Endothelial cell of umbilical vein (primary cell): ENCODE measurements at regions of chr10 and their contacts with region 1.

Region 1: GRCh38 chr10:3467052-3467951 is 294.7 kb upstream of the PITRM1 start:
- DNase-seq: peak; percentile 99
- H3K4me3 ChIP-seq: peak overlapping the region in 1 of 3 experiments; percentile 45
- H3K27ac ChIP-seq: peak overlapping the region; percentile 100
- H3K4me1 ChIP-seq: peaks cover 44% of the 10 kb centered on the region
- H3K27me3 ChIP-seq: no peaks in the 10 kb centered on the region
- CTCF ChIP-seq: peak; percentile 63 to 71
- POLR2A ChIP-seq: peak; percentile 18

Region 2: GRCh38 chr10:3197348-3198003 is 269.8 kb before region 1 on chr10:
- CTCF ChIA-PET with region 1: no interaction called
- POLR2A ChIA-PET with region 1: no interaction called
- dilution Hi-C with region 1: no loop called
- intact Hi-C with region 1: loop called (anchors 1 kb)
- DNase-seq: peak; percentile 86
- H3K4me3 ChIP-seq: peak overlapping the region in 2 of 3 experiments; percentile 1 to 6
- H3K27ac ChIP-seq: no peak overlapping the region
- H3K4me1 ChIP-seq: peaks cover 12% of the 10 kb centered on the region
- H3K27me3 ChIP-seq: peaks cover 0 to 6% of the 10 kb centered on the region in 2 experiments
- CTCF ChIP-seq: peak; percentile 93 to 96
- POLR2A ChIP-seq: no peak

Region 3: DNA sequence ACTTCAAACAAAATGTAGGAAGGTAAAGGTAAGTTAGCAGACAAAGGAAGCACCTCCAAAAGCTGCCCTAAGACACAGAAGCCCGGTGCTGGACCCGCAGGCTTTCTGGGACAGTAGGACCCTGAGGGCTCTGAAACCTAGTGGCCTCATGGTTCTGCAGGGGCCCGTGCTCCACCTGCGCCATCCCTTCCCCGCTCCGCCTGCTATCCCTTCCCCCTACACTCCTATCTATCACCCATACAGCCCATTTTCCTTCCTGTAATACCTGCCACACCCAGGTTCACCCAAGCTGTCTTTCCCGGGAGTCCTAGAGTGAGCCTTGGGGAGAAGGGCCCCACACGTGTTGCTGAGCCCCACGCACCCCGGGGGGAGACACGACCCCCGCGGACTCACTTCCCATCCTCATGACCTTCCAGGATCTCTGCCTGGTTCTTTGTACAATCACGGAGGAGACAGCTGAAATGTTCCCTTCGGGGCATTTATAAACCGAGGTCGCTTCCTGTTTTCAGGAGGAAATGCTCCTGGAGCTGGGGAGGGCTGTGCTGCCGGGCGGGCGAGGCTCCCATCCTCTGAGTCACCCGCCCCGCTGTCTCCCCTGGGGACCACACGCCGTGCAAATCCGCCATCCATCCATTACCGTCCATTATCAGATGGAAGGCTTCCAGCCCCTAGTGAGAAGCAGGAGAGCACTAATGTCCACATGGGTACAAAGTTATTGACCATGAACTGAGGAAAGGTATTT is 43.0 kb before region 1 on chr10:
- CTCF ChIA-PET with region 1: interaction called, 5 read pairs
- POLR2A ChIA-PET with region 1: no interaction called
- dilution Hi-C with region 1: no loop called
- intact Hi-C with region 1: loop called (anchors 1 kb)
- DNase-seq: peak; percentile 45
- H3K4me3 ChIP-seq: no peak overlapping the region
- H3K27ac ChIP-seq: peak overlapping the region; percentile 72
- H3K4me1 ChIP-seq: peaks cover 38% of the 10 kb centered on the region
- H3K27me3 ChIP-seq: no peaks in the 10 kb centered on the region
- CTCF ChIP-seq: no peak
- POLR2A ChIP-seq: no peak

Region 4: DNA sequence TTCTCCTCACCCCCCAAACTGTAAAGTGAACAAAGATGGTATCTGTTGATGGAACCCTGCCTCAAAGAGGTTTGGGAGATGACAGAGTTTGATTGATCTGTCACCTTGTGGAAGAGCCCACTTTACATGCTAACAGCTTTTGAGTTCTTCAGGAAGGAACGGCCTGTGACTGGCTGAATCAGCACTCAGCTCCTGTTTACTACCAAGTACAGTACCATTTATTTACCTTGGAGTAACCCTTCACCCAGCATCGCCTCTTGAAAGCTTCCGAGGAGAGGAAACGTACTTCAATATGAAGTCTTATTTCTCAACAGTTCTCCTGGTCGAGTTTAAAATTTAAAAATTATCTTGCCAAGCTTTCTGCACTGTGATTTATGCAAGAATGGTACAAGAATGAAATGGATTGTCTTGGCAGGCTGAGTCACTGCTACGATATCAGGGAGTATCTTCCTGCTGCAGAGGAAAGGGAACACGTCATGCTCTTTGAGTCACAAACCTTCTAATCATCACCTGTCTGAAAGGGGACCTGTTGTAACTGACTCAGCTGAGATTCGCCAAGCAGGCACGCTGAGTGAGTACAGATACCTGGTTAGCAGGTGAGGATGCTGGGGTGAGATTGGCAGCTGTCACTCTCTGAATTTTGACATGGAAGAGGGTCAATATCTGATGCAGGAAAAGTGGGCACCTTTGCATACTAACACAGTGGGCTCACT is 287.6 kb after region 1 on chr10:
- CTCF ChIA-PET with region 1: interaction called, 3 read pairs
- POLR2A ChIA-PET with region 1: no interaction called
- dilution Hi-C with region 1: no loop called
- intact Hi-C with region 1: loop called (anchors 1 kb)
- DNase-seq: peak; percentile 94
- H3K4me3 ChIP-seq: no peak overlapping the region
- H3K27ac ChIP-seq: peak overlapping the region; percentile 93
- H3K4me1 ChIP-seq: peaks cover 24% of the 10 kb centered on the region
- H3K27me3 ChIP-seq: no peaks in the 10 kb centered on the region
- CTCF ChIP-seq: no peak
- POLR2A ChIP-seq: peak; percentile 43

Region 5: GRCh38 chr10:3887885-3888476 is 420.7 kb after region 1 on chr10:
- CTCF ChIA-PET with region 1: no interaction called
- POLR2A ChIA-PET with region 1: no interaction called
- dilution Hi-C with region 1: no loop called
- intact Hi-C with region 1: loop called (anchors 1 kb)
- DNase-seq: peak; percentile 97
- H3K4me3 ChIP-seq: peak overlapping the region in 1 of 3 experiments; percentile 22
- H3K27ac ChIP-seq: peak overlapping the region; percentile 100
- H3K4me1 ChIP-seq: peaks cover 56% of the 10 kb centered on the region
- H3K27me3 ChIP-seq: no peaks in the 10 kb centered on the region
- CTCF ChIP-seq: no peak
- POLR2A ChIP-seq: peak; percentile 65

Region 6: GRCh38 chr10:4353964-4354363 is 886.7 kb after region 1 on chr10:
- CTCF ChIA-PET with region 1: no interaction called
- POLR2A ChIA-PET with region 1: no interaction called
- dilution Hi-C with region 1: no loop called
- intact Hi-C with region 1: loop called (anchors 2 kb)
- DNase-seq: peak; percentile 96
- H3K4me3 ChIP-seq: no peak overlapping the region
- H3K27ac ChIP-seq: peak overlapping the region; percentile 94
- H3K4me1 ChIP-seq: peaks cover 46% of the 10 kb centered on the region
- H3K27me3 ChIP-seq: no peaks in the 10 kb centered on the region
- CTCF ChIP-seq: no peak
- POLR2A ChIP-seq: no peak

Region 7: DNA sequence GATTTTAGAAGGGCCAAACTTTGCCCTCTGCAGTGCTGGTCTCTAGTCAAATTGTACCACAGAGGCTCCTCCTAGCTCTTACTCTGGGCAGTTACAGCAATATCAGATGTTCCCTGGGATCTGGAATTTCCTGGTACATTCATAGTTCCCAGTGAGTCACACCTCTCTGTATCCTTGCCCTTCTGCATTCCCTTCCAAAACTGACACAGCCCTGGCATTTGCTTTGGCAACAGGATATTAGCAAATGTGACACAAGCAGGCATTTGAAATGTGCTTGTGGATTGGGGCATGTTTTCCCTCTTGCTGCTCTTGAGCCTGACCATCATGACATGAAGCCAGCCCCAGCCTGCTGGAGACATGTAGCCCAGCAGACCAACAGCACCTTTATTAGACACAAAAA is 1074.0 kb after region 1 on chr10:
- CTCF ChIA-PET with region 1: no interaction called
- POLR2A ChIA-PET with region 1: no interaction called
- dilution Hi-C with region 1: no loop called
- intact Hi-C with region 1: no loop called
- DNase-seq: peak; percentile 94
- H3K4me3 ChIP-seq: no peak overlapping the region
- H3K27ac ChIP-seq: peak overlapping the region; percentile 93
- H3K4me1 ChIP-seq: peaks cover 10% of the 10 kb centered on the region
- H3K27me3 ChIP-seq: no peaks in the 10 kb centered on the region
- CTCF ChIP-seq: peak in 1 of 2 donors; percentile 18
- POLR2A ChIP-seq: no peak

Region 8: DNA sequence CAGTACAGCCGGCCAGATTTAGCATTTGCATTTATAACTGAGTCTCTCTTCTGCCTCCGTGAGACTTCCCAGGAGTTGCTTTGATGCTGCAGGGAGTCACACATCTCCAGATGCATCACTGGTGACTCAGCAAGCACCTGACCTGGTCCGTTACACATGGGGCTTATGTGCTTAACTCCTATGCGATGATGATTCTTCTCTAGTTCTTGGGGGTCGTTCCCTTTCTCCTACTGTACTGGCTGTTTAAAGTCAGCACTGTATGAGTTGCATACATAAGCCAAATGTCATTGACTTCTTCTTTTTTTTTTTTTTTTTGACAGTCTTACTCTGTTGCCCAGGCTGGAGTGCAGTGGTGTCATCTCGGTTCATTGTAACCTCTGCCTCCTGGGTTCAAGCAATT is 1345.7 kb after region 1 on chr10:
- CTCF ChIA-PET with region 1: no interaction called
- POLR2A ChIA-PET with region 1: no interaction called
- dilution Hi-C with region 1: no loop called
- intact Hi-C with region 1: loop called (anchors 5 kb)
- DNase-seq: peak; percentile 22
- H3K4me3 ChIP-seq: no peak overlapping the region
- H3K27ac ChIP-seq: no peak overlapping the region
- H3K4me1 ChIP-seq: peaks cover 31% of the 10 kb centered on the region
- H3K27me3 ChIP-seq: peaks cover 0 to 2% of the 10 kb centered on the region in 2 experiments
- CTCF ChIP-seq: no peak
- POLR2A ChIP-seq: no peak